ENCODE measurements at regions of chr16 and their contacts with region 1.

Region 1: GRCh38 chr16:71484006-71484893 is 4.9 kb downstream of the ZNF19 start:
- DNase-seq: peak; percentile 72
- H3K4me3 Mint-ChIP-seq: peak overlapping the region; percentile 84
- H3K27ac Mint-ChIP-seq: peak overlapping the region; percentile 23
- H3K4me1 Mint-ChIP-seq: peaks cover 14% of the 10 kb centered on the region
- H3K27me3 Mint-ChIP-seq: no peaks in the 10 kb centered on the region

Region 2: GRCh38 chr16:71461686-71462648 is 22.3 kb before region 1 on chr16 and contains the start of gene ZNF23:
- intact Hi-C with region 1: loop called (anchors 1 kb)
- DNase-seq: peak; percentile 68
- H3K4me3 Mint-ChIP-seq: peak within 1 kb of the TSS; percentile 82
- H3K27ac Mint-ChIP-seq: peak within 1 kb of the TSS; percentile 49
- H3K4me1 Mint-ChIP-seq: peaks cover 6% of the 10 kb centered on the region
- H3K27me3 Mint-ChIP-seq: no peaks in the 10 kb centered on the region
- total RNA-seq, gene ZNF23: 4.9 and 6.0 TPM in 2 replicates

Region 3: DNA sequence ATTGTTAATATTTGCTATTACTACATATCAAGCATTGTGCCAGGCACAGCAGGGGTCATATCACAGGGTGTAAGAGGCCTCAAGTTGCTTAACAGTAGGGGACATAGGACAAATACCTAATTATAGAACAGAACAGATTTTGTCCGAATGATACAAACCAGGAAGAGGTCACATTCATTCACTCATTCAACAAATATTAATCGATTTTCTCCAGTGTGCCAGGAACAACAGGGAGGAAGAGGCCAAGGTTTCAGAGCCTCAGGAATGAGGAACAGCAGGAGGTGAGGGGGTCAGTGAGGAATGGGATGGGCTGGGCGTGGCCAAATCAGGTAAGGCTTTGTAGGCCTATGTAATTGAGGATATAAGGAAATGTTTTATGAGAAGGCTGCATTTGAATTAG is 30.8 kb after region 1 on chr16:
- intact Hi-C with region 1: no loop called
- DNase-seq: no peak
- H3K4me3 Mint-ChIP-seq: no peak overlapping the region
- H3K27ac Mint-ChIP-seq: no peak overlapping the region
- H3K4me1 Mint-ChIP-seq: no peaks in the 10 kb centered on the region
- H3K27me3 Mint-ChIP-seq: no peaks in the 10 kb centered on the region